CD8-positive, alpha-beta T cell (primary cell): ENCODE measurements at regions of chr18 and their contacts with region 1.

Region 1: DNA sequence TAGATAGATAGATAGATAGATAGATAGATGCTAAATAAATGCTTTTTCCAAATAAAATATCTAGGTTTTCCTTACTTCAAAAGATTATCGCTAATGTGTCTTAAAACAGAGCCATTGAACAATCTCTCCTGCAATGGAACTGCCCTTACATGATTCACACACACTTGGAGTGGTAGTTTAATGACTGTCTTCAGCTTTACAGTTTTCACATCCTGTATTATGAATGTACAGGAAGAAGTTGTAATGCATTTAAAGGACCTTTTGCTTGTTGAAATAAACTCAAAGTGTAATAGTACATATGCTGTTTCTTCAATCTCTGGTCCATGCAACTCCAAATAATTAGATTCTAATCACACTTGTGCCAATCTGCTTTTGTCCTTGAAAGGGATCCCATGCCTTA is 797.6 kb upstream of the CDH2 start:
- DNase-seq: no peak
- ATAC-seq: no peak
- H3K4me3 ChIP-seq: no peak overlapping the region
- H3K4me3 Mint-ChIP-seq: no peak overlapping the region
- H3K27ac ChIP-seq: no peak overlapping the region
- H3K27ac Mint-ChIP-seq: no peak overlapping the region
- H3K4me1 ChIP-seq: no peaks in the 10 kb centered on the region
- H3K4me1 Mint-ChIP-seq: no peaks in the 10 kb centered on the region
- H3K27me3 ChIP-seq: no peaks in the 10 kb centered on the region
- H3K27me3 Mint-ChIP-seq: no peaks in the 10 kb centered on the region
- CTCF ChIP-seq: no peak

Region 2: DNA sequence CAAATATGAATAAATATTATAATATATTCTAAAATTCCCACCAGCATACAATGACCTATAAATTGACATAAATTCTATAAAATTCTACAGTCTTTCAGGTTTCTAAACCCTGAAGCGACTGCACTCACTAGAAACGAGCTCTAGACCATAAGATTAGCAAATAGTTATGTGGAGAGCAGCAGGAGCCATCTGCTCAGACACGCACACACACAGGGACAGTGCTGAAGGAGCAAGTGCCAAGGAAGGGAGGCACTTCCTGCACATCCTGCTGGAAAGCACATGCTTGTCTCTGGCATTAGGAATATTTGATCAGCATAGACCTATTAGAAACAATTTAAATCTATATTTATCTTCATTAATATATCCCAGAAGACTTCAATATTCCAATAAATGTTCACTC is 83.7 kb before region 1 on chr18:
- CTCF ChIA-PET with region 1: no interaction called
- POLR2A ChIA-PET with region 1: no interaction called
- intact Hi-C with region 1: no loop called
- DNase-seq: no peak
- ATAC-seq: no peak
- H3K4me3 ChIP-seq: no peak overlapping the region
- H3K4me3 Mint-ChIP-seq: no peak overlapping the region
- H3K27ac ChIP-seq: no peak overlapping the region
- H3K27ac Mint-ChIP-seq: no peak overlapping the region
- H3K4me1 ChIP-seq: no peaks in the 10 kb centered on the region
- H3K4me1 Mint-ChIP-seq: no peaks in the 10 kb centered on the region
- H3K27me3 ChIP-seq: no peaks in the 10 kb centered on the region
- H3K27me3 Mint-ChIP-seq: no peaks in the 10 kb centered on the region
- CTCF ChIP-seq: no peak

Region 3: GRCh38 chr18:29248805-29249204 is 274.3 kb after region 1 on chr18:
- CTCF ChIA-PET with region 1: no interaction called
- POLR2A ChIA-PET with region 1: no interaction called
- intact Hi-C with region 1: loop called in 1 of 2 experiments (anchors 10 kb)
- DNase-seq: no peak
- ATAC-seq: no peak
- H3K4me3 ChIP-seq: no peak overlapping the region
- H3K4me3 Mint-ChIP-seq: no peak overlapping the region
- H3K27ac ChIP-seq: no peak overlapping the region
- H3K27ac Mint-ChIP-seq: no peak overlapping the region
- H3K4me1 ChIP-seq: no peaks in the 10 kb centered on the region
- H3K4me1 Mint-ChIP-seq: no peaks in the 10 kb centered on the region
- H3K27me3 ChIP-seq: no peaks in the 10 kb centered on the region
- H3K27me3 Mint-ChIP-seq: no peaks in the 10 kb centered on the region
- CTCF ChIP-seq: no peak